ENCODE measurements at regions of chr14 and their contacts with region 1.

Region 1: GRCh38 chr14:99415496-99416281 is 65.0 kb downstream of the SETD3 start:
- DNase-seq: peak; percentile 46 to 93
- ATAC-seq: peak; percentile 96 to 100 (median 99)
- H3K4me3 ChIP-seq: no peak overlapping the region
- H3K4me3 Mint-ChIP-seq: no peak overlapping the region
- H3K27ac ChIP-seq: no peak overlapping the region
- H3K27ac Mint-ChIP-seq: peak overlapping the region; percentile 66 to 67
- H3K4me1 ChIP-seq: no peaks in the 10 kb centered on the region
- H3K4me1 Mint-ChIP-seq: peaks cover 20 to 23% of the 10 kb centered on the region in 2 donors
- H3K27me3 ChIP-seq: no peaks in the 10 kb centered on the region
- H3K27me3 Mint-ChIP-seq: no peaks in the 10 kb centered on the region
- CTCF ChIP-seq: peak; percentile 97

Region 2: GRCh38 chr14:98138666-98139065 is 1277.0 kb before region 1 on chr14:
- intact Hi-C with region 1: loop called (anchors 1 kb)
- DNase-seq: peak; percentile 27 to 91
- ATAC-seq: peak; percentile 66 to 77 (median 67)
- H3K4me3 ChIP-seq: no peak overlapping the region
- H3K4me3 Mint-ChIP-seq: no peak overlapping the region
- H3K27ac ChIP-seq: peak overlapping the region; percentile 37
- H3K27ac Mint-ChIP-seq: peak overlapping the region in 1 of 2 donors; percentile 39
- H3K4me1 ChIP-seq: peaks cover 18% of the 10 kb centered on the region
- H3K4me1 Mint-ChIP-seq: peaks cover 22 to 31% of the 10 kb centered on the region in 2 donors
- H3K27me3 ChIP-seq: no peaks in the 10 kb centered on the region
- H3K27me3 Mint-ChIP-seq: peaks cover 0 to 9% of the 10 kb centered on the region in 2 donors
- CTCF ChIP-seq: peak; percentile 76

Region 3: GRCh38 chr14:99271951-99272631 is 143.6 kb before region 1 on chr14 and contains the start of gene BCL11B:
- intact Hi-C with region 1: loop called (anchors 5 kb)
- DNase-seq: peak; percentile 73 to 96
- ATAC-seq: peak; percentile 71 to 89 (median 78)
- H3K4me3 ChIP-seq: peak within 1 kb of the TSS; percentile 61
- H3K4me3 Mint-ChIP-seq: peak within 1 kb of the TSS; percentile 99
- H3K27ac ChIP-seq: peak within 1 kb of the TSS; percentile 60
- H3K27ac Mint-ChIP-seq: peak within 1 kb of the TSS; percentile 90 to 91
- H3K4me1 ChIP-seq: peaks cover 43% of the 10 kb centered on the region
- H3K4me1 Mint-ChIP-seq: peaks cover 65 to 71% of the 10 kb centered on the region in 2 donors
- H3K27me3 ChIP-seq: no peaks in the 10 kb centered on the region
- H3K27me3 Mint-ChIP-seq: no peaks in the 10 kb centered on the region
- CTCF ChIP-seq: peak; percentile 65
- total RNA-seq, gene BCL11B: 43.5 to 61.5 (median 56.2) TPM

Measured in natural killer cell (primary cell).